H1 (cell line): ENCODE measurements at regions of chr1 and their contacts with region 1.

Region 1: GRCh38 chr1:156193488-156194299 is at the start of gene SLC25A44:
- DNase-seq: peak; percentile 96 to 99
- H3K4me3 ChIP-seq: peak within 1 kb of the TSS; percentile 78 to 97 (median 94)
- H3K27ac ChIP-seq: peak within 1 kb of the TSS; percentile 73; the same call in 1 of the 2 replicates
- H3K4me1 ChIP-seq: peaks cover 2 to 16% (median 4%) of the 10 kb centered on the region in 4 experiments; a peak in 5 of 7 replicates
- H3K27me3 ChIP-seq: no peaks in the 10 kb centered on the region
- CTCF ChIP-seq: peak; percentile 25 to 52 (median 51)
- EP300 ChIP-seq: 0 out of 3 replicates have a peak, but pooled peaks of 1 of the 2 experiments have one; percentile 26
- POLR2A ChIP-seq: peak; percentile 59 to 66; a peak in 2 of 3 replicates
- RAD21 ChIP-seq: peak in 1 of 2 experiments; percentile 20; a peak in 1 of 4 replicates
- total RNA-seq, gene SLC25A44: 23.4 and 31.4 TPM in 2 replicates

Region 2: DNA sequence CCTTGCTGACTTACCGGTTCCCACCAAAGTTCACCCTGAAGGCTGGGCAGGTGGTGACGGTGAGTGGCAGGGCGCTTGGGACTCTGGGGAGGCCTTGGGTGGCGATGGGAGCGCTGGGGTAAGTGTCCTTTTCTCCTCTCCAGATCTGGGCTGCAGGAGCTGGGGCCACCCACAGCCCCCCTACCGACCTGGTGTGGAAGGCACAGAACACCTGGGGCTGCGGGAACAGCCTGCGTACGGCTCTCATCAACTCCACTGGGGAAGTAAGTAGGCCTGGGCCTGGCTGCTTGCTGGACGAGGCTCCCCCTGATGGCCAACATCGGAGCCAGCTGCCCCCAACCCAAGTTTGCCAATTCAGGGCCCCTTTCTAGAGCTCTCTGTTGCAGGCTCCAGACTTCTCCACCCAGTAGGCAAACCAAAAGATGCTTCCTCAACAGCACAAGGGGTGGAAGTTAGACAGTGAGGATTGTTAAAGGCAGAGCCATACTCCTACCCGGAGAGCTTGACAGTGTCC is 56.7 kb before region 1 on chr1:
- CTCF ChIA-PET with region 1: interaction called, 28 read pairs
- POLR2A ChIA-PET with region 1: interaction called, 3 read pairs
- DNase-seq: peak in 1 of 2 experiments; percentile 67
- H3K4me3 ChIP-seq: no peak overlapping the region
- H3K27ac ChIP-seq: no peak overlapping the region
- H3K4me1 ChIP-seq: peaks cover 0 to 6% (median 4%) of the 10 kb centered on the region in 4 experiments; a peak in 4 of 7 replicates
- H3K27me3 ChIP-seq: no peaks in the 10 kb centered on the region
- CTCF ChIP-seq: peak; percentile 59 to 71 (median 65)
- EP300 ChIP-seq: no peak
- POLR2A ChIP-seq: no peak
- RAD21 ChIP-seq: peak; percentile 32 to 51; a peak in 3 of 4 replicates

Region 3: DNA sequence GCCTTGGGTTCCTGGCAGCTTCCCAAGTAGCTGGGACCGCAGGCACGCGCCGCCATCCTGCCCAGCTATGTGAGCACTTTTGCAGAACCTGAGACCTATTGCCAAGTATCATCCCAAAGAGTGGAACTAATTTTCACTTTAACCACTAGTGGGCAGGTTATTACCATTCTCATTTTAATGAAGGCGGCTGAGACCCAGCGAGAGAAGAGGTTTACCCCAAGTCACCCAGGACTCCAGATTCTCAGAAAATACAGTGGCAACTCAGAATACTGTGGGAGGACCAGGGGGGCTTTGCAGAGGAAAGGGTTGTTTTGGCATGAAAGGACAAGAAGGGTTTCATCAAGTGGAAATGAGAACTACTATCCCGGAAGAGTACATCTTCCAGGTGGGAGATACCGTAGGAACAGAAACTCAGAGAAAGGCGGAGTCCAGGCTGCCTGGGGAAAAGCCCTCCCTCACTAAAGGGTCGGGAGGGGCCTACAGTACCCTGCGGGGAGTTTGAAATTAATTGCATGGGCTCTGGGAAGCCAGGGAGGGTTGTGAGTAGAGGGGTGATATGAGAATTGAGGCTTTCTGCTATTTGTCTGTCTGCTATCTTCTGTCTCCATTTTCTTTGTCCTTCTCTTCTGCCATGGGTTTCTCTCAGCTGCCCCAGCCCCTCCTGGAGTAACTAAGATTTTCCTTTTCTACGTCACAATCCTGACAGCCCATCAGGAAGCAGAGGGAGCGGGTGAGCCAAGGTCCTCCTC is 47.5 kb before region 1 on chr1:
- CTCF ChIA-PET with region 1: interaction called, 28 read pairs
- POLR2A ChIA-PET with region 1: interaction called, 19 read pairs
- DNase-seq: no peak
- H3K4me3 ChIP-seq: peak overlapping the region in 1 of 4 experiments; percentile 35; a peak in 3 of 8 replicates
- H3K27ac ChIP-seq: peak overlapping the region; percentile 17; the same call in 1 of the 2 replicates
- H3K4me1 ChIP-seq: peaks cover 20 to 39% (median 29%) of the 10 kb centered on the region in 4 experiments
- H3K27me3 ChIP-seq: no peaks in the 10 kb centered on the region
- CTCF ChIP-seq: peak in 2 of 3 experiments; percentile 60 to 62; a peak in 3 of 4 replicates
- EP300 ChIP-seq: no peak
- POLR2A ChIP-seq: no peak
- RAD21 ChIP-seq: peak; percentile 74 to 79

Region 4: DNA sequence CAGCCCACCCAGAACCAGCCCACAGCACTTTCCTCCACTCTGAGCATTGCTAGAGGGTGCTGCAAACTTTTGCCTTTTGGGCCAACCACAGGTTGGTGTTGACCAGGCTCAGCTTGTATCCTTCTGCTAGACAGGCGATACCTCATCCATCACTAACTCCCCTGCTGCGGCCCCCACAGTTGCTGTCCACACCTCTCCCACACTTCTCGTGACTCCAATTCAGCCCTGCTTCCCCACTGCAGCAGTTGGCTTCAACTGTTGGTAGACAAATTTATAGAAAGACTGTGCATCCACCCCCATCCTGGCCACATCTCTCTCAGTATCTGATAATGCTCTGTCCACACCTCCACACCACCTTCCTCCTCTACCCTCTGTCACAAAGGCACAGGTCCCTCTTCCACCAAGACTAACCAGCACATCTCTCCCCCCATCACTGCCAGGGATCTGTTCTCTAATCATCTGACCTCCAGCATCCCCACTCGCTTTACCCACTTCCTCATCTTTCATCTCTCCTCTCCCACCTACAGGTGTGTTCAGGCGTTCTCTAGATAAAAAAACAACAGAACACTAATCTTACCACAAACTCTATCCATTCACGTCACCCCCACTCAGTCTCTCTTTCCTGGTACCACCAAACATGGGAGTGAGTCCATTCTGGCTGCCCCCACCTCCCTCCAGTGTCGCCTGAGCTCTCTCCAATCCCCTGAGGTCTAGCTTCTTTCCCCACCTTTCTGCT is 15.6 kb before region 1 on chr1:
- CTCF ChIA-PET with region 1: interaction called, 21 read pairs
- POLR2A ChIA-PET with region 1: interaction called, 14 read pairs
- DNase-seq: no peak
- H3K4me3 ChIP-seq: no peak overlapping the region
- H3K27ac ChIP-seq: no peak overlapping the region; the same call in 1 of the 2 replicates
- H3K4me1 ChIP-seq: peaks cover 6 to 21% (median 14%) of the 10 kb centered on the region in 4 experiments
- H3K27me3 ChIP-seq: no peaks in the 10 kb centered on the region
- CTCF ChIP-seq: no peak
- EP300 ChIP-seq: no peak
- POLR2A ChIP-seq: no peak
- RAD21 ChIP-seq: no peak

Region 5: DNA sequence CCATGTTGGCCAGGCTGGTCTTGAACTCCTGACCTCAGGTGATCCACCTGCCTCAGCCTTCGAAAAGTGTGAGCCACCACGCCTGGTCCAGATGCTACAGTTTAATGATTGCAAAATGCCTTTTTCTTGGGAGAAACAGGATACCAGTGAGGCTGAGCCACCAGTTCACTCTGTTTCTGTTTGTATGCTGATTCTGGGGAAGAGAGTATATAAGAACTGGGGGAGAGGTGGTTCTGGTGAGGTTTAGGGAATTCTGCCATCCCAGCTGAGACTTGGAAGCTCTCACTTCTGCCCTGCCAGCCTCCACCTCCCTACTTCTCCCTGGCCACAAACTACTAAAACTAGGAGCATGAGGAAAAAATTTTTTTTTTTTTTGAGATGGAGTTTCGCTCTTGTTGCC is 11.0 kb after region 1 on chr1:
- CTCF ChIA-PET with region 1: interaction called, 5 read pairs
- POLR2A ChIA-PET with region 1: interaction called, 15 read pairs
- DNase-seq: no peak
- H3K4me3 ChIP-seq: no peak overlapping the region
- H3K27ac ChIP-seq: no peak overlapping the region
- H3K4me1 ChIP-seq: peaks cover 0 to 2% (median 0%) of the 10 kb centered on the region in 4 experiments; a peak in 1 of 7 replicates
- H3K27me3 ChIP-seq: no peaks in the 10 kb centered on the region
- CTCF ChIP-seq: no peak
- EP300 ChIP-seq: no peak
- POLR2A ChIP-seq: no peak
- RAD21 ChIP-seq: no peak